Caco-2 (cell line): ENCODE measurements at regions of chr16 and their contacts with region 1.

Region 1: GRCh38 chr16:80931801-80932712 is 74.6 kb downstream of the CMC2 start:
- DNase-seq: peak; percentile 65 to 81
- H3K4me3 ChIP-seq: peak overlapping the region; percentile 53
- H3K4me3 Mint-ChIP-seq: peak overlapping the region; percentile 81
- H3K27ac Mint-ChIP-seq: peak overlapping the region; percentile 54
- H3K4me1 ChIP-seq: peaks cover 5% of the 10 kb centered on the region
- H3K4me1 Mint-ChIP-seq: peaks cover 9% of the 10 kb centered on the region
- H3K27me3 ChIP-seq: no peaks in the 10 kb centered on the region
- H3K27me3 Mint-ChIP-seq: peaks cover 2% of the 10 kb centered on the region
- CTCF ChIP-seq: peak in 1 of 2 experiments; percentile 52

Region 2: DNA sequence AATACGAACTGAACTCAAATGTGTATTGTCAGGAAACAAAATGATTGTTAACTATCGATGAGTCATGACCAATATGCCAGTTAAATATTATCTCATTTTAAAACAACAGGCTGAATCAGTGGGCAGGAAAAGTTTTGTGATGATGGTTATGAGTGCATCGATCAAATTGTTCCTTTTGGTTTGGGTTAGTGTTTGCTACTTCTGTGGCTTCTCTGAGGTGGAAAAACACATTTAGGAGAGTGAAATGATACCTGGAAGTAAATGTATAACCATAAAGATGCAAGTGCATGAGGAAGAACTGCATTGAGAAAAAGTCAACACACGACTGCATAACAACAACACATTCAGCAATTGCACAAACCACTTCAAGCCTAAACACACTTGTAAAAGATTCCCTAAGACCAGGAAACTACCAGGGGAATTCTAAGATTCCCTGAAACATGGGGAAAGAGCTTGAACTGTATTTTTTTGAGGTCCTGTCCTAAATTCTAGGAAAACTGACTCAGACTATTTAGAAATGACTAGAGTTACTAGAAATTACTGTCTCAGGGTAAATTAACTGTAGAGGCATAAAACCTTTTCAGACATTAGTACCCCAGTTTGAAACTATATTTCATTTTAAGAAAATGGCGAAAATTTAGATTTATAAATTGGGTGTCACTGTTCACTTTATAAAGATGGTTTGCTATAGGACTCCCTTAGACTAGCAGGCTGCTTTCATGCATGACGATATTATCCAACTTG is 172.5 kb before region 1 on chr16:
- CTCF ChIA-PET with region 1: no interaction called
- POLR2A ChIA-PET with region 1: no interaction called
- intact Hi-C with region 1: no loop called
- DNase-seq: no peak
- H3K4me3 ChIP-seq: no peak overlapping the region
- H3K4me3 Mint-ChIP-seq: no peak overlapping the region
- H3K27ac Mint-ChIP-seq: no peak overlapping the region
- H3K4me1 ChIP-seq: no peaks in the 10 kb centered on the region
- H3K4me1 Mint-ChIP-seq: no peaks in the 10 kb centered on the region
- H3K27me3 ChIP-seq: no peaks in the 10 kb centered on the region
- H3K27me3 Mint-ChIP-seq: no peaks in the 10 kb centered on the region
- CTCF ChIP-seq: no peak

Region 3: DNA sequence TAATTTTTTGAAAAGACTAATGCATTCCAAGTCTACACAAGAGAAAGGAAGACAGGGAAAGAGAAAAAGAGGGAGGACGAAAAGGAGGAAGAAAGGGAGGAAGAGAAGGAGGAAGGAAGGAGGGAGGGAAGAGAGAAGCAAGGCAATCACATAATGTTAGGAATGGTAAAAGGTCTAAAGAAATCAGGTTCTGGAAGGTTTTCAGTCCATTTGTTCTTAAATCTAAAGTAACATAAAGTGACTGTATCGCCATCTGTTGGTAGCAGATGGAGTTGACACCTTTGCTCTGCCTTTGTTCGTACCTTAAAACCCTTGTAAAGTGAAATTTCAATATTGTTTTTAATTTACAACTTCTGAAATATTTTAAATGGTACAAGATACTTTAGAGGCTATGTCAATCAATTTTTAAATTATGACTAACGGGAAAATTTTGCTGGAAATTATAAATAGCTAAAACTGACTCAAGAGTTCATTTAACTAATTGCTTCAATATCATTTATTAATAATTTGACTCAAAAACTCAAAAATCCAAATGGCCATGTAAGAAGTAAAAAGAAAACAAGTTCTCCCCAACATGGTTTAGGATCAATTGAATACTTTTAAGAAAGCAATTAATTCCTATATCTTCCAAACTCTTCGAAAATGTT is 107.2 kb before region 1 on chr16:
- CTCF ChIA-PET with region 1: no interaction called
- POLR2A ChIA-PET with region 1: no interaction called
- intact Hi-C with region 1: loop called (anchors 2 kb)
- DNase-seq: peak in 1 of 2 experiments; percentile 40
- H3K4me3 ChIP-seq: no peak overlapping the region
- H3K4me3 Mint-ChIP-seq: no peak overlapping the region
- H3K27ac Mint-ChIP-seq: no peak overlapping the region
- H3K4me1 ChIP-seq: no peaks in the 10 kb centered on the region
- H3K4me1 Mint-ChIP-seq: no peaks in the 10 kb centered on the region
- H3K27me3 ChIP-seq: no peaks in the 10 kb centered on the region
- H3K27me3 Mint-ChIP-seq: peaks cover 10% of the 10 kb centered on the region
- CTCF ChIP-seq: peak; percentile 87 to 88

Region 4: GRCh38 chr16:80883159-80883642 is 48.9 kb before region 1 on chr16:
- CTCF ChIA-PET with region 1: no interaction called
- POLR2A ChIA-PET with region 1: no interaction called
- intact Hi-C with region 1: loop called (anchors 1 kb)
- DNase-seq: peak; percentile 73 to 82
- H3K4me3 ChIP-seq: no peak overlapping the region
- H3K4me3 Mint-ChIP-seq: no peak overlapping the region
- H3K27ac Mint-ChIP-seq: peak overlapping the region; percentile 20
- H3K4me1 ChIP-seq: peaks cover 25% of the 10 kb centered on the region
- H3K4me1 Mint-ChIP-seq: peaks cover 17% of the 10 kb centered on the region
- H3K27me3 ChIP-seq: no peaks in the 10 kb centered on the region
- H3K27me3 Mint-ChIP-seq: no peaks in the 10 kb centered on the region
- CTCF ChIP-seq: no peak

Region 5: GRCh38 chr16:80974649-80975376 is 42.8 kb after region 1 on chr16:
- CTCF ChIA-PET with region 1: no interaction called
- POLR2A ChIA-PET with region 1: no interaction called
- intact Hi-C with region 1: no loop called
- DNase-seq: no peak
- H3K4me3 ChIP-seq: no peak overlapping the region
- H3K4me3 Mint-ChIP-seq: no peak overlapping the region
- H3K27ac Mint-ChIP-seq: no peak overlapping the region
- H3K4me1 ChIP-seq: no peaks in the 10 kb centered on the region
- H3K4me1 Mint-ChIP-seq: peaks cover 5% of the 10 kb centered on the region
- H3K27me3 ChIP-seq: no peaks in the 10 kb centered on the region
- H3K27me3 Mint-ChIP-seq: no peaks in the 10 kb centered on the region
- CTCF ChIP-seq: peak; percentile 27 to 62